Heart right ventricle (tissue), 16 donors: ENCODE measurements at regions of chr22 and their contacts with region 1.

Region 1: GRCh38 chr22:39674536-39674935 is 104.0 kb downstream of the CACNA1I start:
- DNase-seq: no peak
- ATAC-seq: no peak
- H3K4me3 ChIP-seq: no peak overlapping the region
- H3K27ac ChIP-seq: no peak overlapping the region
- H3K4me1 ChIP-seq: no peaks in the 10 kb centered on the region
- H3K27me3 ChIP-seq: peaks cover 0 to 44% (median 20%) of the 10 kb centered on the region in 7 donors
- CTCF ChIP-seq: no peak

Region 2: GRCh38 chr22:39601180-39601535 is 73.4 kb before region 1 on chr22:
- intact Hi-C with region 1: loop called in 1 of 10 experiments (anchors 10 kb)
- DNase-seq: no peak
- ATAC-seq: no peak
- H3K4me3 ChIP-seq: no peak overlapping the region
- H3K27ac ChIP-seq: no peak overlapping the region
- H3K4me1 ChIP-seq: no peaks in the 10 kb centered on the region
- H3K27me3 ChIP-seq: peaks cover 0 to 63% (median 31%) of the 10 kb centered on the region in 7 donors
- CTCF ChIP-seq: no peak

Region 3: GRCh38 chr22:39723899-39724351 is 49.4 kb after region 1 on chr22:
- intact Hi-C with region 1: no loop called
- DNase-seq: no peak
- ATAC-seq: peak in 3 of 8 donors; percentile 17 to 66 (median 35)
- H3K4me3 ChIP-seq: no peak overlapping the region
- H3K27ac ChIP-seq: no peak overlapping the region
- H3K4me1 ChIP-seq: peaks cover 0 to 6% (median 0%) of the 10 kb centered on the region in 9 donors
- H3K27me3 ChIP-seq: peaks cover 0 to 45% (median 28%) of the 10 kb centered on the region in 7 donors
- CTCF ChIP-seq: no peak